ENCODE measurements at regions of chr3 and their contacts with region 1.

Region 1: GRCh38 chr3:136909187-136909586 is 47.2 kb downstream of the NCK1 start:
- DNase-seq: no peak
- ATAC-seq: peak; percentile 77
- H3K4me3 ChIP-seq: 0 out of 2 replicates have a peak overlapping the region, but pooled peaks have one; percentile 3
- H3K27ac ChIP-seq: peak overlapping the region; percentile 46; the same call in 1 of the 2 replicates
- H3K4me1 ChIP-seq: peaks cover 4% of the 10 kb centered on the region
- H3K27me3 ChIP-seq: no peaks in the 10 kb centered on the region
- CTCF ChIP-seq: no peak
- EP300 ChIP-seq: no peak
- POLR2A ChIP-seq: no peak
- RAD21 ChIP-seq: no peak

Region 2: GRCh38 chr3:136882572-136882971 is 26.6 kb before region 1 on chr3:
- CTCF ChIA-PET with region 1: interaction called, 3 read pairs
- POLR2A ChIA-PET with region 1: no interaction called
- RAD21 ChIA-PET with region 1: interaction called, 6 read pairs
- SMC1A ChIA-PET with region 1: interaction called, 12 read pairs
- in situ Hi-C with region 1: no loop called
- intact Hi-C with region 1: no loop called
- DNase-seq: no peak
- ATAC-seq: peak; percentile 69
- H3K4me3 ChIP-seq: no peak overlapping the region
- H3K27ac ChIP-seq: no peak overlapping the region
- H3K4me1 ChIP-seq: peaks cover 16% of the 10 kb centered on the region
- H3K27me3 ChIP-seq: no peaks in the 10 kb centered on the region
- CTCF ChIP-seq: no peak
- EP300 ChIP-seq: no peak
- POLR2A ChIP-seq: no peak
- RAD21 ChIP-seq: no peak

Region 3: DNA sequence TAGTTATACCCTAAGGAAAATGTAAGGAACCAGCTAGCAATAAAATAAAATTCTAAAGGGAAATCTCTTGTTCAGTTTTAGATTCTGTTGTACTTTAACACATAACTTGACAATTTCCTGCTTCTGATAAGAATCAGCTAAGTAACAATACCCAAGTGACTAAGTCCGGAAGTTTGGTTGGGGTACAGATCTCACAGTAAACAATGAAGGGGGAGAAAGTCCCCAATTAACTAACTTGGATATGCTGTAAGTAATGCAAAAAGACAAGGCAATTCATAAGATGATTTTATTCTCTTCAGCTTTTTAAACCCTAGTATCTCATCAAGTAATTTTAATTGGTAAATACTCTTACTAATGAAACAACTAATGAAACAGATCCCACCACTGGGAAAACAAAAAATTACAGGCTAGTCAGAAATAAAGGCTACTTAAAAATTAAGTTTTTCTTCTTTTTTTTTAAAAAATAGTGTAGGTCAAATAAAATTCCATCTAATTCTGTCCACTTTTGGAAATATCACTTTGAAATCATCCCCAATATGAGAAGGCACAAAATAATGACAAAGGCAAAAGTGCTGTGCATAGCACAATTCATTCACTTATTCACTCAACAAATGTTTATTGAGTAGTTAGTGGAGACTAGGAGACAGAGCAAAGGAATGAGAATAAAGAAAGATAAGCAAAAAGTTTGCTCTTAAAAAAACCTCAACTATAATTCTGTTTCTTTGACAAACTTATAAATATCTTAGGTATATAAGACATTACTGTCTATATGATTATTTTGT is 10.8 kb after region 1 on chr3:
- CTCF ChIA-PET with region 1: interaction called, 3 read pairs
- POLR2A ChIA-PET with region 1: interaction called, 4 read pairs
- RAD21 ChIA-PET with region 1: interaction called, 3 read pairs
- SMC1A ChIA-PET with region 1: interaction called, 42 read pairs
- in situ Hi-C with region 1: no loop called
- intact Hi-C with region 1: no loop called
- DNase-seq: no peak
- ATAC-seq: peak; percentile 95
- H3K4me3 ChIP-seq: no peak overlapping the region
- H3K27ac ChIP-seq: peak overlapping the region; percentile 41
- H3K4me1 ChIP-seq: peaks cover 2% of the 10 kb centered on the region; the same call in 1 of the 2 replicates
- H3K27me3 ChIP-seq: no peaks in the 10 kb centered on the region
- CTCF ChIP-seq: no peak
- EP300 ChIP-seq: peak in 1 of 2 experiments; percentile 42; a peak in 1 of 4 replicates
- POLR2A ChIP-seq: no peak
- RAD21 ChIP-seq: no peak

Region 4: DNA sequence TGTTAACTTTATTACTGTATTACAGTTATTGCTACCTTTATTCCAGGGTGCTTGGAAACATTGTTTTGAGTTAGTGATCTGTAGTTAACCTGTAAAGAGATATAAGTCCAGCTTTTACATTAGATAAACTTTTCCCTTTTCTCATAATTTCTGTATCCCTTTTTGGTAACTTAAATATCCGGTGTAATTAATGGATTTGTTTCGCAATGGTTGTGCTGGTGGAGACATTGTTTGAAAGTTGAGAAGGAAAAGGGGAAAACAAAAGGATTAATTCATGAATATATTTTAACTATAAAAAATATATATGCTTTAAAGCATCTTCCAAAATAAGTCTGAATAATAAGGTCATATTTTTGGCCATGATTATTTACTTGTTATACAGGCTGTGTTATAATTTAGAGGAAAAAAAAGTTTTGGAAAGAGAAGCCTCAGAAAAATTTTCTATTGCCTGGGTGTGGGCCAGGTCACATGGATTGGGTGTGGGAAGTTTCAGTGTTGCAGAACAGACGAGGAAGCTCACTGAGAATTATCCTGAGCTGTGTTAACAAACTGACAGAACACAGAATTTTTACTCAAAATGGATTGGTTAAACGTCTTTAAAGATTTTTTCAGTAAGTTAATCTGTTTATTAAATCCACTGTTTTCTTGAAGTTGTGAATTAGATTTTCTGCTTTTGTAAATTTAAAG is 20.9 kb after region 1 on chr3:
- CTCF ChIA-PET with region 1: no interaction called
- POLR2A ChIA-PET with region 1: no interaction called
- RAD21 ChIA-PET with region 1: interaction called, 3 read pairs
- SMC1A ChIA-PET with region 1: interaction called, 42 read pairs
- in situ Hi-C with region 1: no loop called
- intact Hi-C with region 1: no loop called
- DNase-seq: no peak
- ATAC-seq: no peak
- H3K4me3 ChIP-seq: no peak overlapping the region
- H3K27ac ChIP-seq: no peak overlapping the region; the same call in 1 of the 2 replicates
- H3K4me1 ChIP-seq: peaks cover 9% of the 10 kb centered on the region; the same call in 1 of the 2 replicates
- H3K27me3 ChIP-seq: no peaks in the 10 kb centered on the region
- CTCF ChIP-seq: no peak
- EP300 ChIP-seq: no peak
- POLR2A ChIP-seq: no peak
- RAD21 ChIP-seq: no peak

Measured in GM12878 (cell line).